HAP-1 (cell line): ENCODE measurements at regions of chr16 and their contacts with region 1.

Region 1: GRCh38 chr16:10181196-10182162 is 749 bp downstream of the GRIN2A start:
- DNase-seq: peak; percentile 44 to 67
- H3K4me3 ChIP-seq: no peak overlapping the region
- H3K4me1 ChIP-seq: no peaks in the 10 kb centered on the region
- H3K27me3 ChIP-seq: peaks cover 15% of the 10 kb centered on the region

Region 2: DNA sequence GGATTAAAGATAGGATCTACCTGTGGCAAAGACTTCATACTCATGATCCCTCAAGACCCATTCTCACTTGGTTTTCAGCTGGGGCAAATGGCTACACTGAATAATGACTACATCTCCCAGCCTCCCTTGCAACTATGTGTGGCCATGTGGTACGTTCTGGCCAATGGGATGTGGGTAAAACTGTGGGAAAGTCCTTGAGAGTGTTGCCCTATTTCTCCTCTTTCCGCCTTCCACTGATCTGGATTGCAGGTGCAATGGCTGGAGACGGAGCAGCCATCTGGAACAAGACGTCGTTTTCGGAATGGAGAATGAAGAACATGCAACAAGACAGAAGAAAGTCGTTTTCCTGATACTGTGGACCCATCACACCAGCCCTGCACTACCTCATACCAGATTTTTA is 1041.5 kb before region 1 on chr16:
- in situ Hi-C with region 1: loop called (anchors 10 kb)
- DNase-seq: peak in 1 of 2 experiments; percentile 50
- H3K4me3 ChIP-seq: no peak overlapping the region
- H3K4me1 ChIP-seq: peaks cover under 1% of the 10 kb centered on the region; the same call in 1 of the 2 replicates
- H3K27me3 ChIP-seq: no peaks in the 10 kb centered on the region

Region 3: GRCh38 chr16:9258423-9259051 is 922.9 kb before region 1 on chr16:
- in situ Hi-C with region 1: loop called (anchors 10 kb)
- DNase-seq: peak in 1 of 2 experiments; percentile 54
- H3K4me3 ChIP-seq: no peak overlapping the region
- H3K4me1 ChIP-seq: no peaks in the 10 kb centered on the region
- H3K27me3 ChIP-seq: no peaks in the 10 kb centered on the region; the same call in none of the 2 replicates

Region 4: DNA sequence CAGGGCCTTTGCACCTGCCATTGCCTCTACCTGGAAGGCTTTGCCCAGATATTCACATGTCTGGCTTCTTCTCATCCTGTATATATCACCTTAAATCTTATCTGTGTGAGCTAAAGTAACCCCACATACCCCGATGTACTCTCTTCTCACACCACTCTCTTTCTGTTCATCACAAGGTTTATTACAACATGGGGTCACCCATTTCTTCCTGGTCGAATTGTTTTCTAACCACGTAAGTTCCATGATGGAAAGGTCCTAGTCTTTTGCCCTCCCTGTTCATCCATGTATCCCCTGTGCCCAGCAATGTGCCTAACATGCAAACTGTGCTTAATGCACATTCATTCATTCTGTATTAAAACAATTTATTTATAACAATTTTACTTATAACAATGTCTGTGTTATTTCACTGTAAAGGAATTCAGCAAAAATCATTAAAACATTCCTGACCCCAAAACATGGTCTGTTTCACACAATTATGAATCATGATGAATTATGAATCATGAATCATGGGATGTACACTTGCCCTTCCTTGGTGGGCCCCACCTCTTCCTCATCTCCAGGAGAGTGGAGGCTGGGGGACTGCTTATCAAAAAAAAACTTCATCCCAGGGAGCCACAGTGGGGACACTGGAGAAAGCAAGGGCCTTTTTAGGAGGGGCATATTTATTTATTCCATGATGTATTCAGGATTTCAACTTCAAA is 335.7 kb before region 1 on chr16:
- in situ Hi-C with region 1: no loop called
- DNase-seq: no peak
- H3K4me3 ChIP-seq: no peak overlapping the region
- H3K4me1 ChIP-seq: no peaks in the 10 kb centered on the region
- H3K27me3 ChIP-seq: no peaks in the 10 kb centered on the region

Region 5: DNA sequence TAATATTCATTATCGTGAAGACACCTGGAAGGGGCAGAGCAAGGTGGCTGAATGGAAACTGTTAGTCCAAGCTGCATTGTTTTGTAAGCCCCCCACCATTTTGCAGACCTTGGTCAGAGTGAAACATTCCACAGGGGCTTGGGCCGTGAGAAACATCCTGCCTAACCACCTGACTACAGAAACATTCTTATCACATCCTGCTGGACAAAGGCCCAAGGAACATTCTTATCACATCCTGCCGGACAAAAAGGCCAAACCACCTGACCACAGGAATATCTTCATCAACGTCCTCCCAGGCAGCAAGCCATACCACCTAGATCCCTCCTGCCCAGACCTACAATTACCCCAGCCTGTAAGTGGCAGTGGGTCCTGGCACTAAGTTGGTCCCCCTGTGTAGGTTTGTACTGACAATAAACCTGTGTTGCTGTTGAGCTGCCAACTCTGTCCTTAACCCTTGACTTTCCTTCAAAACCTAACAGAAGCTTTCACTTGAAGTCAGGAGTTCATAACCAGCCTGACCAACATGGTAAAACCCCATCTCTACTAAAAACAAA is 224.0 kb after region 1 on chr16:
- in situ Hi-C with region 1: no loop called
- DNase-seq: no peak
- H3K4me3 ChIP-seq: no peak overlapping the region
- H3K4me1 ChIP-seq: no peaks in the 10 kb centered on the region
- H3K27me3 ChIP-seq: no peaks in the 10 kb centered on the region